Gastrocnemius medialis (tissue), 4 donors: ENCODE measurements at regions of chr3 and their contacts with region 1.

Region 1: DNA sequence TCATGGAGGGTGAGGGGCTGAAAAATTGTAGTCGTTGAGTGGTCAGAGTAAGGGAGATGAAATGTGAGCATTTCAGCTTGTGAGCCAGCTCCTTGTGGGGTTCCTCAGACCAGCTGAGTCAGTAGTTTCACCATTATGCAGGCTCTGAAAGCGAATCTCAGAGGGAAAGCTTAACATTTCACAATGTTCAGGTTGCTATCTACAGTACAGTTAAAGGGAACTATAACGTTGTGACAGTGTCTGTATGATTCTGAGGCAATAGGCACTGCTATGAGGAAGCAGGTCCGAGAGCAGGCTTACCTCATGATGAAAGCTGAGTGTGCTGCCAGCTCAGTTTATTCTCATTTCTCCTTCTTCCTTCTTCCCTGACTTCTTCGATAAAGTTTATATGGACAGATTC is 469.6 kb downstream of the EDEM1 start:
- DNase-seq: no peak
- ATAC-seq: no peak
- H3K4me3 ChIP-seq: no peak overlapping the region
- H3K27ac ChIP-seq: no peak overlapping the region
- H3K4me1 ChIP-seq: no peaks in the 10 kb centered on the region
- H3K27me3 ChIP-seq: no peaks in the 10 kb centered on the region
- CTCF ChIP-seq: no peak
- POLR2A ChIP-seq: no peak

Region 2: DNA sequence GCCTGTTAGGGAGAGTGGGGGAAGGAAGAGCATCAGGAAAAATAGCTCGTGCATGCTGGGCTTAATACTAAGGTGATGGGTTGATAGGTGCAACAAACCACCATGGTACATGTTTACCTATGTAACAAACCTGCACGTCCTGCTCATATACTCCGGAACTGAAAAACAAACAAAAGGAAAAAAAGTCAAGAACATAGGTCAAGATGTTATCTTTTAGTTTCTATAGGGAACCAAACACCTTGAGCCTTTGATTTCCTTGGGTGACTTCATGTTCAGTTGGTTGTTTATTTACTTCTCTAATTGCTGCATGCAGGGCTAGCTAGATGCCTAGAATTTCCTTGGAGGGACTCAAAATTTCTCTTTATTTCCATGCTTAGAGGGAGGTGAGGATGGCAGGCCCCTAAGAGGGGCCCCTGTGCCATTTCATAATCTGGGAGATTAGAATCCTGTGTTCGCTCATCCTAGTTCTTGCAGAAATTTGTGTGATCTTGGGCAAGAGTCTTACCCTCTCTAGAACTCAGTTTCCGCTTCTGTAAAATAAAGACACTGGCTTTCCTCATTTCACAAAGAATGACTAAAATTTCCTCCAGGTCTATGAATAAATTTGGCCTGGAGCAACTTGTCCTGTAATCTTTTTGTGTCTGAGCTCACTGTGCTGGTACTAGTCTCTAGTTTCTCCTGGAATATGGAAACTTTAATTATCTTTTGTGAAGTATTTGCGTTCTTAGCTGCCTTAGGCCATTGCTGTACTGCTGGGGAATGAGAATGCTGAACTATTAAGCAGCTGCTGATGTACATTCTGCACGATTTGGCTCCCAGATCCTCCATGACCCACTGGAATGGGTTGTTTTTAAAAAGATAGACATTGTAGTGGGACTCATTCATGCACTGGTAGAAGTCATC is 12.1 kb before region 1 on chr3:
- in situ Hi-C with region 1: no loop called
- intact Hi-C with region 1: no loop called
- DNase-seq: no peak
- ATAC-seq: no peak
- H3K4me3 ChIP-seq: no peak overlapping the region
- H3K27ac ChIP-seq: no peak overlapping the region
- H3K4me1 ChIP-seq: no peaks in the 10 kb centered on the region
- H3K27me3 ChIP-seq: no peaks in the 10 kb centered on the region
- CTCF ChIP-seq: no peak
- POLR2A ChIP-seq: no peak

Region 3: GRCh38 chr3:5754602-5755001 is 97.5 kb after region 1 on chr3:
- in situ Hi-C with region 1: loop called in 1 of 4 experiments (anchors 25 kb)
- intact Hi-C with region 1: no loop called
- DNase-seq: no peak
- ATAC-seq: no peak
- H3K4me3 ChIP-seq: no peak overlapping the region
- H3K27ac ChIP-seq: no peak overlapping the region
- H3K4me1 ChIP-seq: no peaks in the 10 kb centered on the region
- H3K27me3 ChIP-seq: no peaks in the 10 kb centered on the region
- CTCF ChIP-seq: no peak
- POLR2A ChIP-seq: no peak

Region 4: DNA sequence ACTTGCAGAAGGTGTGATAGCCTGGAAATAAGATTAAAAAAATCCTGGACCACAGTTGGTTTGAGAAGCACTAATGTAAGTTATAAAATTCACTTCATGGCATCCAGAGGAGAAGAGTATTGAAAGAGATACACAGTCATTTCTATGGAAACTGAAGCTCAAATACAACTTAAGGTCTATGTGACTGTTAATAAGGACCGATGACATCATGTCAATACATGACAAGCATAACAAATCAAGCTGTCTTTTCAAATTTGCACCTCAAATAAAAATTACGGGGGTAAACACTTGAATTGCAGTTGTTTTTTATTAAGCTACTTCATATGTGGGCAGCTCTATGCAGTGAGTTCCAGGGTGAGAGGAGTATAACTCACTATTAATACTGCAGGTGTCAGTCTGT is 728.6 kb after region 1 on chr3:
- in situ Hi-C with region 1: no loop called
- intact Hi-C with region 1: no loop called
- DNase-seq: no peak
- ATAC-seq: no peak
- H3K4me3 ChIP-seq: no peak overlapping the region
- H3K27ac ChIP-seq: no peak overlapping the region
- H3K4me1 ChIP-seq: no peaks in the 10 kb centered on the region
- H3K27me3 ChIP-seq: no peaks in the 10 kb centered on the region
- CTCF ChIP-seq: no peak
- POLR2A ChIP-seq: no peak